Breast epithelium (tissue), 4 donors: ENCODE measurements at regions of chr16 and their contacts with region 1.

Region 1: DNA sequence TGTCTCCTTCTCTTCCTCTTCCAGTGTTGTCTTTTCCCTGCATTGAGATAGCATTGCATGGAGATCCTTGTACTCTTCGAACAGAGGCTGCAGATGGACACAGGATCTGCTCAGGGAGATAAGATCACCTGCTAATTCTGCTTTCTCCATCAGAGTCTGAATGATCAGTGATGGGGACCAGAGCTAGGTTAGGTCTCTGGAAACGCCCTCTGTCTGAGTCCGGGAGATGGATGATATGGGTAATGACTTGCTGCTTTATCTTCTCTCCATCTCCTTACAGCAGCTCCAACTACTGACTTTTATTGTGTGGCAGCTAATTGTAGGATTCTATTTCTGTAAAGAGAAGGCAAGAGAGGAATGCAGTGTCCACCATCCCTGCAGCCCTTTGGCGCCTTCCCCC is 435.6 kb downstream of the WWOX start:
- DNase-seq: no peak
- H3K4me3 ChIP-seq: no peak overlapping the region
- H3K27ac ChIP-seq: no peak overlapping the region
- H3K4me1 ChIP-seq: no peaks in the 10 kb centered on the region
- H3K27me3 ChIP-seq: no peaks in the 10 kb centered on the region
- CTCF ChIP-seq: no peak
- POLR2A ChIP-seq: no peak

Region 2: GRCh38 chr16:78570399-78571141 is 35.5 kb after region 1 on chr16:
- intact Hi-C with region 1: loop called (anchors 2 kb)
- DNase-seq: no peak
- H3K4me3 ChIP-seq: no peak overlapping the region
- H3K27ac ChIP-seq: no peak overlapping the region
- H3K4me1 ChIP-seq: no peaks in the 10 kb centered on the region
- H3K27me3 ChIP-seq: no peaks in the 10 kb centered on the region
- CTCF ChIP-seq: no peak
- POLR2A ChIP-seq: no peak